ENCODE measurements at regions of chrX and their contacts with region 1.

Region 1: DNA sequence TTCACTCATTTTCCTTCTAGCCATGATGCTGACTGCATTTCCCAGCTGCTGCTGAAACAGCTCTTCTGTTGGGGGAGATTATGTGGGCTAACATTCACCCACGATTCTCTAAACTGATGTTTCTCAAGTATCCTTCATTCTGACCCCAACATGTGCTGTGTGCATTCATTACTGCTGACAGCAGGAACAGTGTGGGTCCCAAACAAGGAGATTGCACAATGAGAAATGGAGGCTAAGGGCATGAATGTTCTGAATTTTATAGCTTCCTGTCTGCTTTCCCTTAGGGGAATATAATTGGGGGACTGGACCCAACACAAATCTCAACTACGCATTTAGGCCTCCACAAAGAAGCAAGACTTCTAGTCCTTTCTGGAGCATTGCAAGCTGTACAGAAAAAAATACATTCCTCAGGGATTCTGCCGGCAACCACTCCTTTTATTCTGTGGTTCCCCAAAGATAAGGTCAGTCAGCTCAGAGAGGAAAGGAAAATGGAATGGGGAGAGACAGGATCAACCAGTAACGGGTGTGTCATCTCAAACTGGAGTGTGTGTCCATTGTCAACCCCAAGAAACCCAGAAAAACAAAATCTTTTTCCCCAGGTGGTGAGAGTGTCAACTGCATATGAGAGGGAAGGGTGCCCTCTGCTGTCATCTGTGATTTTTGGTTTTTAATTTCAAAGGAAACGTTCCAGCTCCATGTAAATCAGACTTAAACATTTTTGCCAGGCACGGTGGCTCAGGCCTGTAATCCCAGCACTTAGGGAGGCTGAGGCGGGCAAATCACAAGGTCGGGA is 81.5 kb upstream of the EGFL6 start:
- DNase-seq: no peak

Region 2: DNA sequence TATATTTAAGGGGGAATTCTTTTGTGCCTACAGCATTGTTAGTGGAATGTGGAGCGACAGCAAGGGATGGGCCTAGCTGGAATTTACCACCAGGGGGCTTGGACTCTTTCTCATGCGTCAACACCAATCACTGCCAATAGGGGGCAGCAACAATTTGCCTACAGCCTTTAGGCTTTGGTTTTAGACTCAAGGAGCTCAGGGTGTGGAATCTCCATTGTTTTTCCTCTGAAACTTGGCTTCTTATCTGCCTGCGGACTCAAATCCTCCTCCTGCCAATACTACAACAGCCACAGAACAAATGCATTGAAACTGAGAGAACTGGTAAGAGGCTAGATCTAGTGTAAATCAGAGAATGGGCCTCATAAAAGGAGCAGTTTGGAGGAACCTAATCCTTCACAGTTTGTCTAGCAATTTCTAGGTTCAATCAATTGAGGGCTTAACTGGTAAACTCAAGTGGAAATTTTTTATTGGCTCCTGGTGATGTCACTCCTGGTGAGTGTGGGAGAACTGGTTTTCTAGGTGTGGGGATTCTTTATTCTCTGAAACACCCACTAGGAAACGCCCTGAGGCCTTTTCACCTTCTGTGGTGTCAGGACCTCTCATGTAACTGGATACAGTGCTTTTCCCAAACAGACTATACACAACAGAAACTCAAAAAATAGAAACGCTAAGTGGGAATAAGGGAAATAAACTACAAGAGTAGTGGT is 540.9 kb before region 1 on chrX:
- intact Hi-C with region 1: loop called (anchors 5 kb)
- DNase-seq: peak; percentile 79

Region 3: GRCh38 chrX:12974796-12975669 is 512.9 kb before region 1 on chrX and contains the start of gene TMSB4X:
- intact Hi-C with region 1: loop called (anchors 2 kb)
- DNase-seq: peak; percentile 95
- total RNA-seq, gene TMSB4X: 921 TPM

Region 4: DNA sequence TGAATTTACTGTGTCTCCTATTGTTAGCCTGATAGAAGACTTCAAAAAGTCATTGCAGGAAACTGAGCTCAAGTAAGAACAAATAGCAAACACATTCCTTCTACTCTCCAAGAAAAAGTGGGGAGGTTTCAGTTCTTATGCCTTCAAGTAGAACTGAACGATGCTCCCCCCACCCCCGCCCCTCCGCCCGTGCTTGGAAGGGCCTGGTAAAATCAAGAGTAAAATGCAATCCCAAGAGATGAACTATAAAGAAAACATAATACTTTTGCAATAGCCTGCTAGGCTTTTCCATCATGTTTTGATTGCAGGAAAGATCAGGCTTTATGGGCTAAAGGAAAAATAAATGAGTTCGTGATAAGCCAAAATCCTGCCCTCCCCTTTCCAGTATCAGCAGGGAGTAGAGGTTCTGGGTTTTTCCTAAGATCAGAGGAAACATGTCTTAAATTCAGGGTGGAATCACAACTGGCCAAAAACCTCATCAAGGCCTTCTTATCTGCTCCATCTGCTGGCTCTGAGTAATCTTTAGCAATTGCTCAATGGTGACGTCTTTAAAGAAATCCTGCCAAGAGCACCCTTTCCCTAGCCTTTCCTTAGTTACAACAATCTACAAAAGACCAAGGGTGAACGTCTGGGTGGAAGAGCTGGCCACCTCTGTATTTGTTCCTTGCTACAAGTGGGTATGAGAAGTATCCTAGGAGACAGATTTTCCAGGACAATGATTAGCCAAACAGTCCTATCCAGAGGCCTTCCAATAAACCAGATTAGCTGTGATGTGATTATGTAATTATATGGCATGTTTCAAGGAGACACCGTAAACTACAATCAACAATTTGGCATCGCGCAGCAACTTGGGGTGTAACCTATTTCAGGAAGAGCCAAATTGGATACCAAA is 377.2 kb before region 1 on chrX:
- intact Hi-C with region 1: loop called (anchors 10 kb)
- DNase-seq: no peak

Region 5: DNA sequence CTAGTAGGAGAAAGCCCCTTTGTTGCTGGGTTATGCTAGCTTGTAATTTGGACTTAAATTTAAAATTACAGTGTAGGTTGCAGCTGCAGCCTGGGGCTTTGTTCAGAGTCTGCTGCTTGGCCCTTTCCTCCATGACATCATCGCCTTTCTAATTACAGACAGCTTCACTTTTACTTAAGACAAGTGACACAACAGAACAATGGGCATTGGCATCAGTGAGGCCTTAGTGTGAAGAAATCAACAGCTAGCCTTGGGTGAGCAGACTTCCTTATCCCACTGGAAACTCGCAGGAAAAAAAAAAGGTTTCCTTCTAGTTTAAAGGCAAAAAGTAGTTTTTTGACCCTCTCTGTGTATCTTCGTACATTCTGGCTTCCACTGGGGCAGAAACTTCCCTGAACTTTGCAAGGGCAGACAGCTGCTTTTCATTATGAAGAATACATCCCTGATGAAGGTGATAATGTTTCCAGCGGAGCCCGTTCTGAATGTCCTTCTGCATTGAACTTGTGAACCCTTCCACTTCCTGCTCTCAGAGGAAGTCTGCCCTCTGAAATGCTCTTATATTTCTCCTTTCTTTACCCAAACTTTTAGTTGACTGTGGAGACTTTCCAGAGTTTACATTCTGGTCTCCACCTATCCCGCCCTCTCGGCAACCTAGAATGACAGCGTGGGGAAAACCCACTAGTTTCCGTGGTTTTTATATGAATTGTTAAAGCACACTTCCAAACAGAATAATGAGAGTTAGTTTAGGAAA is 320.3 kb before region 1 on chrX:
- intact Hi-C with region 1: loop called (anchors 10 kb)
- DNase-seq: no peak

Region 6: GRCh38 chrX:13254076-13254785 is 233.7 kb before region 1 on chrX:
- intact Hi-C with region 1: loop called (anchors 10 kb)
- DNase-seq: no peak

Region 7: GRCh38 chrX:13293700-13294099 is 194.2 kb before region 1 on chrX:
- intact Hi-C with region 1: no loop called
- DNase-seq: no peak

Measured in cardiac septum (tissue), 1 donor.